Calu3 (cell line): ENCODE measurements at regions of chr19 and their contacts with region 1.

Region 1: GRCh38 chr19:41206926-41207750 is 11.9 kb upstream of the AXL start:
- DNase-seq: no peak
- H3K4me3 Mint-ChIP-seq: no peak overlapping the region
- H3K27ac Mint-ChIP-seq: no peak overlapping the region
- H3K4me1 Mint-ChIP-seq: peaks cover 13% of the 10 kb centered on the region
- H3K27me3 Mint-ChIP-seq: no peaks in the 10 kb centered on the region
- CTCF ChIP-seq: no peak

Region 2: DNA sequence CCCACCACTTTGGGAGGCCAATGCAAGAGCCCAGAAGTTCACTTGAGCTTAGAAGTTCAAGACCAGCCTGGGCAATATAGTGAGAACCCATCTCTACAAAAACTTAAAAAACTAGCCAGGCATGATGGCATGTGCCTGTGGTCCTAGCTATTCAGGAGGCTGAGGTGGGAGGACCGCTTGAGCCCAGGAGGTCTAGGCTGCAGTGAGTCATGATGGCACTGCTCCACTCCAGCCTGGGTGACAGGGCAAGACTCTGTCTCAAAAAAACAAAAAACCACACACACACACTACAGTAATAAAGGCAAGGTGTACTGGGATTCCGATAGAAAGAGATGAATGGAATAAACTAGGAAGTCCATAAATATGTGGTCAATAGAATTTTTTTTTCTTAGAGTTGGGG is 57.3 kb before region 1 on chr19:
- CTCF ChIA-PET with region 1: no interaction called
- intact Hi-C with region 1: no loop called
- DNase-seq: no peak
- H3K4me3 Mint-ChIP-seq: no peak overlapping the region
- H3K27ac Mint-ChIP-seq: no peak overlapping the region
- H3K4me1 Mint-ChIP-seq: no peaks in the 10 kb centered on the region
- H3K27me3 Mint-ChIP-seq: no peaks in the 10 kb centered on the region
- CTCF ChIP-seq: no peak

Region 3: DNA sequence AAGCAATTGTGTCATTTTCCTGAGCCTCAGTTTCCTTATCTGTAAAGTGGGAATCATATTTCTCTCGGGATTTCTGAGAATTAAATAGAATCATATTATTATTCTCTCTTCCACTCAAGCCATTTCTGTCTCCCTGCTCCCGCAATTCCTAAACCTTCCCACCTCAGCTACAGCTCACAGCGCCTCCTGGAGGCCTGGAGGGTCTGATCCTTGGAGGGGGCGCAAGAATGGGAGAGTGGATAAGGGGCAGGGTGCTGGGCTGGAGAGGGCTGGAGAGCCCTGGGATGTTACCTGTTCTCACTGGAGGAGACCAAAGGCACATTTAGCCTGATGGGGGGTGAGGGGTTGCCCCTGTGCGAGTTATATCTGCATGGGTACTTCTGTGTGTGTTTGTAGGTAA is 45.2 kb before region 1 on chr19:
- CTCF ChIA-PET with region 1: no interaction called
- intact Hi-C with region 1: no loop called
- DNase-seq: no peak
- H3K4me3 Mint-ChIP-seq: no peak overlapping the region
- H3K27ac Mint-ChIP-seq: no peak overlapping the region
- H3K4me1 Mint-ChIP-seq: no peaks in the 10 kb centered on the region
- H3K27me3 Mint-ChIP-seq: no peaks in the 10 kb centered on the region
- CTCF ChIP-seq: no peak

Region 4: GRCh38 chr19:41308392-41309179 is 101.4 kb after region 1 on chr19:
- CTCF ChIA-PET with region 1: interaction called, 15 read pairs
- intact Hi-C with region 1: no loop called
- DNase-seq: peak; percentile 95
- H3K4me3 Mint-ChIP-seq: peak overlapping the region; percentile 91
- H3K27ac Mint-ChIP-seq: peak overlapping the region; percentile 94
- H3K4me1 Mint-ChIP-seq: peaks cover 28% of the 10 kb centered on the region
- H3K27me3 Mint-ChIP-seq: no peaks in the 10 kb centered on the region
- CTCF ChIP-seq: peak; percentile 99